Testis (tissue), 5 donors: ENCODE measurements at regions of chr16 and their contacts with region 1.

Region 1: GRCh38 chr16:48164907-48165726 is 9.3 kb upstream of the ABCC12 start:
- DNase-seq: peak; percentile 82
- H3K4me3 ChIP-seq: no peak overlapping the region
- H3K27ac ChIP-seq: no peak overlapping the region
- H3K4me1 ChIP-seq: no peaks in the 10 kb centered on the region
- H3K27me3 ChIP-seq: no peaks in the 10 kb centered on the region
- CTCF ChIP-seq: peak; percentile 73 to 83 (median 74)
- POLR2A ChIP-seq: no peak

Region 2: DNA sequence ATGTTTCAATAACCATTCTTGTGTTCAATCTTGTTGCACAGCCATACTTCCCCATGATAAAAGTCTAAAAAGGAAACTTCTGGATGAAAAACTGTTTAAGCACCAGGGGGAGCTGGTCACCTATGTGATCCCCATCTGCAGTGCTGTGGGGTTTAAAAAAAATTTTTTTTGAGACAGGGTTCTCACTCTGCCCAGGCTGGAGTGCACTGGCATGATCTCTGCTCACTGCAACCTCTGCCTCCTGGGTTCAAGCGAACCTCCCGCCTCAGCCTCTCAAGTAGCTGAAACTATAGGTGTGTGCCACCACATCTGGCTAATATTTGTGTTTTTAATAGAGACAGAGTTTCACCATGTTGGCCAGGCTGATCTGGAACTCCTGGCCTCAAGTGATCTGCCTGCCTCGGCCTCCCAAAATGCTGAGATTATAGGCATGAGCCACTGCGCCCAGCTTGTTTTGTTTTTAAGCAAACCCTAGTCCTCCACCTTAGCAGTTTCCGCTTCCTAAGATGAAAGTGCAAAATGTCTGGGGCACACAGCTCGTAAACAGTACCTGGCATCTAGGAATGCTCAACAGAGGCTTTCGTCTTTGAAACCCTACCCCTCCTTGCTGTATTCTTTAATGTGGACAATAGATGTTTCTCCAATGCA is 1217.1 kb before region 1 on chr16:
- intact Hi-C with region 1: loop called (anchors 10 kb)
- DNase-seq: no peak
- H3K4me3 ChIP-seq: no peak overlapping the region
- H3K27ac ChIP-seq: no peak overlapping the region
- H3K4me1 ChIP-seq: no peaks in the 10 kb centered on the region
- H3K27me3 ChIP-seq: no peaks in the 10 kb centered on the region
- CTCF ChIP-seq: peak; percentile 36 to 43 (median 39)
- POLR2A ChIP-seq: no peak

Region 3: DNA sequence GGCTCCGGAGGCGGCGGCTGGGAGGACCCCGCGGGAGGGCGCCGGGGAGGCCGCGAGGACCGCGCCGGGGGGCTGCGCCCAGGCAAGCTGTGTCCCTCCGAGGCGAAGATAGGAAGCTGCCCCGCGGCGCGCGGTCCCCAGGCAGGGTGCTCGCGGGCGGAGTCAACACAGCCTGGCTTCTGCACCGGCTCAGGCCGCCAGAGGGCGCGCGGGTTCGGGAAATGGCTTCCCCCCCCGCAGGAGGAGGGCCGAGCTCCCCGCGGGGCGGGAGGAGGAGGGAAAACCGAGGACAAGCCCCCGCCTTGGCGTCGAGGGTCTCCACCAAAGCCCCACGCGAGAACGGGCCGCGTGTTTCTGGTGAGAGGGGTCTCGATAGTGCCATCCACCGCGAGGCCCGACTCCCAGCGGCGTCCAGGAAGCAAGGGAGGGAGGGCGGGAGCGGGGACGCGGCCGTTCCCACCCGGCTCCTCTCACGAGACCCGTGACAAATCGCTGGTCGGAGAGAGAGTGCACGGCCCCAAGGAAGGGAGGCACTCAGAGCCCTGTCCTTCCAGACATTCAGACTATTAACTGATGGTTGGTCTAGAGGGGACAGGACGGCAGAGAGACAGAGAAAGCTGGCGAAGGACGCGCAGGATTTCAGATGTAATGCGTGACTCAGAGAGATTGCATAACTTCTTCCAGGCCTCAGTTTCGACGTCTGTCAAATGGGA is 1127.2 kb before region 1 on chr16:
- intact Hi-C with region 1: loop called (anchors 10 kb)
- DNase-seq: peak; percentile 93
- H3K4me3 ChIP-seq: peak overlapping the region; percentile 66 to 67
- H3K27ac ChIP-seq: peak overlapping the region; percentile 40 to 79
- H3K4me1 ChIP-seq: no peaks in the 10 kb centered on the region
- H3K27me3 ChIP-seq: no peaks in the 10 kb centered on the region
- CTCF ChIP-seq: peak; percentile 80 to 93 (median 85)
- POLR2A ChIP-seq: no peak